B cell (primary cell): ENCODE measurements at regions of chr3 and their contacts with region 1.

Region 1: DNA sequence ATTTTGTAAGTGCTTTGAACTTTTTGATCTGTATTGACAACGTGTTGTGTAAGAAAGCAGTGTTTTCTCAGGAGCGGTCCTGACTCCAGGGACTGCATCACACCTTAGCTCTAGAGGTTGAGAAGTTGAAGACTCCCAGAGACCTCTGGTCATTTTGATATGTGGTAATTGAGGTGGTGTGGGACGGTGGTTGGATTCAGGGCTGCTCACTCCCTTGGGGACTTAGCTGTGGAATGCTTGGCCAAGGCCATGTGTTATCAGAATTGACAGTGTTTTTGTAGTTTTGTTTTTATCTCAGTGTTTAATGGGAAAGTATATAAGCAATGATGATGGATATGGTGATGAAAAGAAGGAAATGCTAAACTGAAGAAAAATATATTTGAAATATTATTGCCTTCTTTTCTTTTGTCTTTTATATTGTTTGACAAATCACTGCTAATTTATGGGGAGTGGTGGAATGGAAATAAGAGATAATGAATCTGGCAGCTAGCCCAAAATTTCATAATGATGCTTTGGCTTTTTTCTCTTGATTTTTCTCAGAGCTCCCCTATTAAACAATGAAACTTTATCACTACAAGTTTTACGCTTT is 16.0 kb downstream of the CMSS1 start:
- DNase-seq: no peak
- ATAC-seq: no peak
- H3K4me3 ChIP-seq: no peak overlapping the region
- H3K4me3 Mint-ChIP-seq: no peak overlapping the region
- H3K27ac ChIP-seq: no peak overlapping the region
- H3K27ac Mint-ChIP-seq: no peak overlapping the region
- H3K4me1 ChIP-seq: no peaks in the 10 kb centered on the region
- H3K4me1 Mint-ChIP-seq: no peaks in the 10 kb centered on the region
- H3K27me3 ChIP-seq: no peaks in the 10 kb centered on the region
- H3K27me3 Mint-ChIP-seq: no peaks in the 10 kb centered on the region
- CTCF ChIP-seq: no peak

Region 2: DNA sequence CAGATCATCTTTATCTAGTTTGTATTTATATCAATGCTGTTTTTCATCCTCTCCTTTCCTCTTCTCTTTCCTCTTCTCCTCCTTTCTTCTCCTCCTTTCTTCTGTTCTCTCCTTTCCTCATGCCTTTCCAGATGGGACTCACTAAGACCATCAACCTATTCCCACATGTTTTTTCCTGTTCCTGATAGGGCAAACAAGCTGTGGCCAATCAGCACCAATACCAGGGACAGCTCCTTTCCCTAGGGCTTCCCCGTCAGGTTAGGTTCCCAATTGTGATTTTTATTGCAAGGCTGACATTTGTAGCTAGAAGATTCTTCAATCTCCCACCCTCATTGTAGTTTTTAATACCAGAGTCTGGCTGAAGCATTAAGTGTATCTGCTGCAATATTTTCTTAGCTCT is 271.6 kb before region 1 on chr3:
- CTCF ChIA-PET with region 1: no interaction called
- POLR2A ChIA-PET with region 1: no interaction called
- intact Hi-C with region 1: no loop called
- DNase-seq: no peak
- ATAC-seq: no peak
- H3K4me3 ChIP-seq: no peak overlapping the region
- H3K4me3 Mint-ChIP-seq: no peak overlapping the region
- H3K27ac ChIP-seq: no peak overlapping the region
- H3K27ac Mint-ChIP-seq: no peak overlapping the region
- H3K4me1 ChIP-seq: no peaks in the 10 kb centered on the region
- H3K4me1 Mint-ChIP-seq: no peaks in the 10 kb centered on the region
- H3K27me3 ChIP-seq: no peaks in the 10 kb centered on the region
- H3K27me3 Mint-ChIP-seq: no peaks in the 10 kb centered on the region
- CTCF ChIP-seq: no peak

Region 3: DNA sequence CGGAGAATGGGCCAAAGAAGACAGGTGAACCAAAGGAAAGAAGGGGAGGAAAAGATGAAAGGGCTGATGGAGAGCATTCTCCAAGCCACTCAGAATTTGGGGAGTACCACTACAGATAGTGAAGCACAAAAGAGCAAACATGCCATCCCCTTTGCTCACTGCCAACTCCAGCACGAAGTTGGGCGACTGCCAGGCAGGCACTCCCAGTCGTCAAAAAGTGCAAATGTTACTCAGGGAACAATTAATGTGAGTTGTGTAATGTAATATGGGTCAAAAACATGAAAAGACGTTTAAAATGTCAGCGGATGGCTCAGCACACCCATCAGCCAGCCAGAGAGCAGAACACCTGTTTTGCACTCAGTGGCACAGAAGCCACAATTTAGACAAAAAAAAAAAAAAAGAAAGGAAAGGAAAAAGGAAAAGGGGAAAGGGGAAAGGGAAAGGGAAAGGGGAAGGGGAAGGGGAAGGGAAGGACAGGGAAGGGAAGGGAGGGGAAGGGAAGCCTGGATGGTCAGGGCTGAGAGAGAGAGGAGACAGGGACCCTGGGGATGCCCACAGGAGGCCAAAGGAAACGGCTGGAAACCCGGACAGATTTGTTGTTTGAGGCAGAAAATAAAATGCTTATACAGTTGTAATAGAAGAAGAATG is 112.6 kb before region 1 on chr3:
- CTCF ChIA-PET with region 1: no interaction called
- POLR2A ChIA-PET with region 1: no interaction called
- intact Hi-C with region 1: no loop called
- DNase-seq: no peak
- ATAC-seq: no peak
- H3K4me3 ChIP-seq: no peak overlapping the region
- H3K4me3 Mint-ChIP-seq: no peak overlapping the region
- H3K27ac ChIP-seq: no peak overlapping the region
- H3K27ac Mint-ChIP-seq: no peak overlapping the region
- H3K4me1 ChIP-seq: no peaks in the 10 kb centered on the region
- H3K4me1 Mint-ChIP-seq: no peaks in the 10 kb centered on the region
- H3K27me3 ChIP-seq: no peaks in the 10 kb centered on the region
- H3K27me3 Mint-ChIP-seq: peaks cover 8% of the 10 kb centered on the region
- CTCF ChIP-seq: no peak

Region 4: DNA sequence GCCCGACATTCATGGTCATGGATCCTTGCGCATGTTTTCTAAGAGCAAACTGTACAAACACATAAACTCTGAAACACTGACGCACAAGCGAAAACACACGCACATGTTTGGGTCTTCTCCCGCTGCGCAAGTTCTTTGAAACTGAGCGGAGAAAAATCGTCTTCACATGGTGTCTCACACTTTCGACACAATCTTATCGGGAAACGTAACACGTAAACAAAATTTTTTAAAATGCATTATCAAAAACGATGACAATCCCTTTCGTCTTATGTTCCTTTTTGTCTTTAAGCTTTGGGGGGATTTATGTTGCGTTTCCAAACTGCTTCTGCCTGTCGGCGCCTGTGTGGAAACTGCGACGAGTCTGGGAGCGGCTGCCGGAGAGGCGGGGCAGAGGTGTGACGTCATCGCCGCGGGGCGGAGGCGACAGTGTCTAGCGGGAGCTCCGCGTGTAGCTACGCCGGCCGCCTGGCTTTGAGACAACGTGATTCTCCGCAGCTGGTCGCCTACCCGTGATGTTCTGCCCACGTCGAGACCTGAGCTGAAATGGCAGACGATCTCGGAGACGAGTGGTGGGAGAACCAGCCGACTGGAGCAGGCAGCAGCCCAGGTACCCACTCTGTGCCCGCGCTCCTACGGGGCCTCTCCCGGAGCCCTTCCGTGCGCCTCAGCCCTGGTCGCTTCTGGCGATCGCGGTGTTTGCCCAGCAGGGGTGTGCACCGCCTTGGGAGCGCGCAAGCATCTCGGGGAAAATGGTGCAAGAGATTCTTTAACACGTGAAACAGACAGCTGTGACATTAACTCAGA is 16.1 kb before region 1 on chr3 and contains the start of gene CMSS1:
- CTCF ChIA-PET with region 1: interaction called, 24 read pairs
- POLR2A ChIA-PET with region 1: no interaction called
- intact Hi-C with region 1: loop called (anchors 2 kb)
- DNase-seq: peak; percentile 98
- ATAC-seq: peak; percentile 91
- H3K4me3 ChIP-seq: peak within 1 kb of the TSS; percentile 71 to 99 (median 89)
- H3K4me3 Mint-ChIP-seq: peak within 1 kb of the TSS; percentile 99
- H3K27ac ChIP-seq: peak within 1 kb of the TSS; percentile 85 to 91
- H3K27ac Mint-ChIP-seq: peak within 1 kb of the TSS; percentile 100
- H3K4me1 ChIP-seq: peaks cover 16 to 17% of the 10 kb centered on the region in 2 donors
- H3K4me1 Mint-ChIP-seq: peaks cover 39% of the 10 kb centered on the region
- H3K27me3 ChIP-seq: no peaks in the 10 kb centered on the region
- H3K27me3 Mint-ChIP-seq: no peaks in the 10 kb centered on the region
- CTCF ChIP-seq: no peak
- total RNA-seq, gene CMSS1: 22.0 and 22.8 TPM in 2 replicates

Region 5: DNA sequence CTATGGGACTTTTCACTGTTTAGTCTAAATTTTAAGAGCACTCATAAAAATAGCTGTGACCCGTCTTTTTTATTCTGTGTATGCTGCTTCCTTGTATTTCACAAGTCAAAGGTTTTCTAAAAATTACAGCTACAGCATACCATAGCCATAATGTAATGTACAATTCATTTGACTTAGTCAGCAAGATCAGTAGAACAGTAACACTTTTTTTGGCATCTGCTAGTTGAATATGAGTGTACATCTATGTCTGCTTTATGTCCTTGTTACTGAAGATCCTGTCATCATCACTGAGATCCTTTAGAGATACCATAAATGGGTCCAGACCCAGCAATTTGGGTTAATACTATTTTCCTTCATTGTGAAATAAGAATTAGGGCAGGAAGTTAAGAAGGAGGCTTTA is 26.1 kb after region 1 on chr3:
- CTCF ChIA-PET with region 1: interaction called, 10 read pairs
- POLR2A ChIA-PET with region 1: no interaction called
- intact Hi-C with region 1: no loop called
- DNase-seq: no peak
- ATAC-seq: no peak
- H3K4me3 ChIP-seq: no peak overlapping the region
- H3K4me3 Mint-ChIP-seq: no peak overlapping the region
- H3K27ac ChIP-seq: no peak overlapping the region
- H3K27ac Mint-ChIP-seq: no peak overlapping the region
- H3K4me1 ChIP-seq: no peaks in the 10 kb centered on the region
- H3K4me1 Mint-ChIP-seq: peaks cover 3% of the 10 kb centered on the region
- H3K27me3 ChIP-seq: no peaks in the 10 kb centered on the region
- H3K27me3 Mint-ChIP-seq: no peaks in the 10 kb centered on the region
- CTCF ChIP-seq: no peak

Region 6: GRCh38 chr3:100254168-100254777 is 420.6 kb after region 1 on chr3:
- CTCF ChIA-PET with region 1: interaction called, 158 read pairs
- POLR2A ChIA-PET with region 1: no interaction called
- intact Hi-C with region 1: loop called (anchors 1 kb)
- DNase-seq: peak; percentile 64
- ATAC-seq: peak; percentile 58
- H3K4me3 ChIP-seq: no peak overlapping the region
- H3K4me3 Mint-ChIP-seq: no peak overlapping the region
- H3K27ac ChIP-seq: no peak overlapping the region
- H3K27ac Mint-ChIP-seq: no peak overlapping the region
- H3K4me1 ChIP-seq: no peaks in the 10 kb centered on the region
- H3K4me1 Mint-ChIP-seq: no peaks in the 10 kb centered on the region
- H3K27me3 ChIP-seq: no peaks in the 10 kb centered on the region
- H3K27me3 Mint-ChIP-seq: no peaks in the 10 kb centered on the region
- CTCF ChIP-seq: peak; percentile 65

Region 7: GRCh38 chr3:100590114-100590839 is 756.6 kb after region 1 on chr3:
- CTCF ChIA-PET with region 1: interaction called, 76 read pairs
- POLR2A ChIA-PET with region 1: interaction called, 10 read pairs
- intact Hi-C with region 1: loop called (anchors 1 kb)
- DNase-seq: peak; percentile 78
- ATAC-seq: peak; percentile 86
- H3K4me3 ChIP-seq: peak overlapping the region in 1 of 5 experiments; percentile 34
- H3K4me3 Mint-ChIP-seq: peak overlapping the region; percentile 5
- H3K27ac ChIP-seq: no peak overlapping the region
- H3K27ac Mint-ChIP-seq: no peak overlapping the region
- H3K4me1 ChIP-seq: peaks cover 0 to 5% of the 10 kb centered on the region in 2 donors
- H3K4me1 Mint-ChIP-seq: peaks cover 3% of the 10 kb centered on the region
- H3K27me3 ChIP-seq: no peaks in the 10 kb centered on the region
- H3K27me3 Mint-ChIP-seq: no peaks in the 10 kb centered on the region
- CTCF ChIP-seq: peak; percentile 92